Kidney (tissue), 22 donors: ENCODE measurements at regions of chr14 and their contacts with region 1.

Region 1: GRCh38 chr14:54566410-54567223 is at the start of gene SAMD4A:
- DNase-seq: peak; percentile 83 to 94 (median 89)
- H3K4me3 ChIP-seq: peak within 1 kb of the TSS; percentile 66 to 85 (median 66)
- H3K27ac ChIP-seq: peak within 1 kb of the TSS; percentile 99
- H3K4me1 ChIP-seq: peaks cover 0 to 15% (median 4%) of the 10 kb centered on the region in 3 donors
- H3K27me3 ChIP-seq: no peaks in the 10 kb centered on the region
- CTCF ChIP-seq: peak; percentile 36
- total RNA-seq, gene SAMD4A: 46.5 TPM

Region 2: DNA sequence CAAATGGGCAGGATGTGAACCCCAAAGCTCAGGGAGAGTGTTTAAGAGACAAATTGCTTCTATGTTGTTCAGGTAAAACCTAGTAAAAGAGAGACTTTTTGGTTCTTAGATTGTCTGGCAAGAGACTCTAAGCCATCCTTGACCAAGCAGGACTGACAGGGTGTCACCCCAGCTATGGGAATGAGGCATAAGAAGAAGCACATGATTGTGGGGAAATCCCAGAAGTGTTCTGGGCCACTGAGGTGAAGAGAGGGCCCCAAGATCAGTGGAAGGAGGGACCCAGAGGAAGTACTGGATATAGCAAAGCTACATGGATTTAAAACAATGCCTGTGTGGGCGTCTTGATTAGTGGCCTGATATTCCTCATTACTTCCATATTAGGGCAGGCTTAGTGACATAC is 99.3 kb after region 1 on chr14:
- intact Hi-C with region 1: no loop called
- DNase-seq: no peak
- H3K4me3 ChIP-seq: no peak overlapping the region
- H3K27ac ChIP-seq: no peak overlapping the region
- H3K4me1 ChIP-seq: no peaks in the 10 kb centered on the region
- H3K27me3 ChIP-seq: no peaks in the 10 kb centered on the region
- CTCF ChIP-seq: no peak

Region 3: GRCh38 chr14:54691525-54692283 is 125.1 kb after region 1 on chr14:
- intact Hi-C with region 1: loop called (anchors 10 kb)
- DNase-seq: peak; percentile 78 to 90 (median 84)
- H3K4me3 ChIP-seq: no peak overlapping the region
- H3K27ac ChIP-seq: no peak overlapping the region
- H3K4me1 ChIP-seq: peaks cover 0 to 8% (median 6%) of the 10 kb centered on the region in 3 donors
- H3K27me3 ChIP-seq: no peaks in the 10 kb centered on the region
- CTCF ChIP-seq: peak; percentile 79